Common myeloid progenitor, CD34-positive (primary cell): ENCODE measurements at regions of chr16 and their contacts with region 1.

Region 1: DNA sequence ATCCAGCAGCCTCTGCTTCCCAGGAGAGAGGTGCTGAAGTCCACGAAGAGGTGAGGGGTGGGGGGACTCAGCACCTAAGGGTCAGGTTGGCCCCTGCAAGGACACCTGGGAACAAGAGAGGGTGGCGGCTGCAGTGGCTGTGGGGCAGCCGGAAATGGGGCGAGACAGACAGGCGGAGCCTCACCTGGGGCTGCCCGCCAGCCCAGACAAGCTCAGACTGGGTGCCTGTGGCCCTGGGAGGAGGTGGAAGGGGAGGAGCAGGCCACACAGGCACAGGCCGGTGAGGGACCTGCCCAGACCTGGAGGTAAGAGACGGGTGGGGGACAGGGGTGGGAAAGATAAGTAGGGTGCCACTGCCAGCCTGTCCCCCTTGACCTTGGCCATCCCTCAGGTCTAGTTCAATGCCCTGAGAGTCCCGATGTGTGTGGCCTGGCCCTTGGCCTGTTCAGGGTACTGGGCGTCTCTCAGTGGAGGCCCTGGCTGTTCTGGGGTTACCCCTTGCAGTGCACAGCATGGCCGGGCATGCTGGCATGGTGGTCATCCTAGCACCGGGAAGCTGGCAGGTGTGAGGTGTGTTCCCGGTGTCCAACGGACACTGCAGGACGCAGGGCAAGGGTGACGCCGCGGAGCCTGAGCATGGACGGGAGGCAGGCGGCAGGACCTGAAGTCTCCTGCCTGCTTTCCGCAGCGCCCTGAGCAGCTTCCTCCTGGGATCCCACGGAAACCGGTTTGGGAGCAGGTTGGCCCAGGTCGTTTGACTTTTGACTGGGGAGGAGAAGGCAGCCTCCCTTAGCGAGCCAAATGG is 8.4 kb upstream of the ADGRG1 start:
- DNase-seq: no peak
- H3K4me3 ChIP-seq: no peak overlapping the region
- H3K27ac ChIP-seq: no peak overlapping the region
- H3K4me1 ChIP-seq: peaks cover 0 to 22% (median 14%) of the 10 kb centered on the region in 4 experiments
- H3K27me3 ChIP-seq: no peaks in the 10 kb centered on the region

Region 2: GRCh38 chr16:57600048-57600835 is 19.8 kb before region 1 on chr16:
- CTCF ChIA-PET with region 1: interaction called, 71 read pairs
- POLR2A ChIA-PET with region 1: no interaction called
- DNase-seq: peak in 1 of 3 donors; percentile 48
- H3K4me3 ChIP-seq: no peak overlapping the region
- H3K27ac ChIP-seq: no peak overlapping the region
- H3K4me1 ChIP-seq: peaks cover 19 to 54% (median 50%) of the 10 kb centered on the region in 4 experiments
- H3K27me3 ChIP-seq: no peaks in the 10 kb centered on the region

Region 3: GRCh38 chr16:57609541-57610401 is 10.3 kb before region 1 on chr16:
- CTCF ChIA-PET with region 1: interaction called, 36 read pairs
- POLR2A ChIA-PET with region 1: no interaction called
- DNase-seq: peak in 2 of 3 donors; percentile 86 to 89
- H3K4me3 ChIP-seq: peak overlapping the region in 2 of 7 experiments; percentile 19 to 25
- H3K27ac ChIP-seq: no peak overlapping the region
- H3K4me1 ChIP-seq: peaks cover 17 to 70% (median 59%) of the 10 kb centered on the region in 4 experiments
- H3K27me3 ChIP-seq: no peaks in the 10 kb centered on the region

Region 4: DNA sequence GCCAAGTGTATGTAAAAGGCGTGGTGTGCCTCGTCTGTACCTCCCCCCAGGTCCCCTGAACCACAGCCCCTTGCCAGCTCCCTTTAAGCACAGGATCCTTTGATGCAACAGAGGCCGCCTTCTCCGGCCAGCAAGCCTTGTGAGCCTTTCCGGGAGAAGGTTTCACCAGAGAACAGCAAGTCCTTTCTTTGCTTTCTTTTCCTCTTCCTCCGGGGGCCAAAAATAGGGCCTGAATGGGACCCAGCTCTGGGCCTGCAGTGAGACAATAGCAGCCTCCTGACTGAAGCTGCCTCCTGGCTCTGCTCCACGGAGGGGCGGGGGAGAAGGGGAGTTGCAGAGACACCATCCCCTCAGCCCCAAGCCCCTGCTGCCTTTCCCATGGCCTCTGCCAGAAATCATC is 17.4 kb after region 1 on chr16:
- CTCF ChIA-PET with region 1: no interaction called
- POLR2A ChIA-PET with region 1: no interaction called
- DNase-seq: no peak
- H3K4me3 ChIP-seq: peak overlapping the region in 2 of 7 experiments; percentile 9 to 44
- H3K27ac ChIP-seq: peak overlapping the region in 1 of 2 experiments; percentile 59
- H3K4me1 ChIP-seq: peaks cover 0 to 91% (median 82%) of the 10 kb centered on the region in 4 experiments
- H3K27me3 ChIP-seq: no peaks in the 10 kb centered on the region